CD8-positive, alpha-beta T cell (primary cell): ENCODE measurements at regions of chr10 and their contacts with region 1.

Region 1: DNA sequence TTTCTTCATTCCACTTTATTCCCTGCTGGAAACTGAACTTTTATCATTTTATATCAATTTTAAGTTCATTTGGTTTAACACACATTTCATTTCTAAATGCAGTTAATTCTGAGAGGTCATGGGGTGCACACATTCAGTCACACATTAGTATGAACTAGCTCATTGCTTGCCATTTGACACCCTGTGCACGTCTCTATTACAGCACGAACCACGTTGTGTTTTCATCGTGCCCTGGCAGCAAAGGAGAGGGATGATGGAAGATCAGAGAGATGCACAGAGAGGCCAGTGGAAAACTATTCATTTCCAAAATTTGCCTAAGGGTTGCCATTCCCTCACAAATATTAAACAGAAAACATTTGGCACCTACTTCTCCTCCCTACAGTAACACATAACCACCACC is 45.4 kb downstream of the CTNNA3 start:
- DNase-seq: no peak
- ATAC-seq: no peak
- H3K4me3 ChIP-seq: no peak overlapping the region
- H3K4me3 Mint-ChIP-seq: no peak overlapping the region
- H3K27ac ChIP-seq: no peak overlapping the region
- H3K27ac Mint-ChIP-seq: no peak overlapping the region
- H3K4me1 ChIP-seq: no peaks in the 10 kb centered on the region
- H3K4me1 Mint-ChIP-seq: no peaks in the 10 kb centered on the region
- H3K27me3 ChIP-seq: no peaks in the 10 kb centered on the region
- H3K27me3 Mint-ChIP-seq: peaks cover 4% of the 10 kb centered on the region
- CTCF ChIP-seq: no peak

Region 2: DNA sequence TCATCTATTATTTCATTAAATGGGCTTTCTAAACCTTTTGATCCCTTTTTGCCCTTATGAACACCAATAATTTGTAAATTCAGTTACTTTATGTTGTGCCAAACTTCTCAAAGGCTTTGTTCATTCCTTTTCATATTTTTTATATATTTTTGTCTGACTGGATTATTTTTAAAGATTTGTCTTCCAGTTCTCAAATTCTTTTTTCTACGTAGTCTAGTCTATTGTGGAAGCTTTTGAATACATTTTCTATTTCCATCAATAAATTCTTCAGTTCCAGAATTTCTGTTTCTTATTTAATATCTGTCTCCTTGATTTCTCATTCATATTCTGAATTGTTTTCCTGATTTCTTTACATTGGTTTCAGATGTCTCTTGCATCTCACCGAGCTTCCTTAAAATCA is 62.8 kb before region 1 on chr10:
- CTCF ChIA-PET with region 1: no interaction called
- POLR2A ChIA-PET with region 1: no interaction called
- intact Hi-C with region 1: loop called in 1 of 2 experiments (anchors 2 kb)
- DNase-seq: no peak
- ATAC-seq: no peak
- H3K4me3 ChIP-seq: no peak overlapping the region
- H3K4me3 Mint-ChIP-seq: no peak overlapping the region
- H3K27ac ChIP-seq: no peak overlapping the region
- H3K27ac Mint-ChIP-seq: no peak overlapping the region
- H3K4me1 ChIP-seq: no peaks in the 10 kb centered on the region
- H3K4me1 Mint-ChIP-seq: no peaks in the 10 kb centered on the region
- H3K27me3 ChIP-seq: no peaks in the 10 kb centered on the region
- H3K27me3 Mint-ChIP-seq: no peaks in the 10 kb centered on the region
- CTCF ChIP-seq: no peak